CD14-positive monocyte (primary cell): ENCODE measurements at regions of chr17 and their contacts with region 1.

Region 1: DNA sequence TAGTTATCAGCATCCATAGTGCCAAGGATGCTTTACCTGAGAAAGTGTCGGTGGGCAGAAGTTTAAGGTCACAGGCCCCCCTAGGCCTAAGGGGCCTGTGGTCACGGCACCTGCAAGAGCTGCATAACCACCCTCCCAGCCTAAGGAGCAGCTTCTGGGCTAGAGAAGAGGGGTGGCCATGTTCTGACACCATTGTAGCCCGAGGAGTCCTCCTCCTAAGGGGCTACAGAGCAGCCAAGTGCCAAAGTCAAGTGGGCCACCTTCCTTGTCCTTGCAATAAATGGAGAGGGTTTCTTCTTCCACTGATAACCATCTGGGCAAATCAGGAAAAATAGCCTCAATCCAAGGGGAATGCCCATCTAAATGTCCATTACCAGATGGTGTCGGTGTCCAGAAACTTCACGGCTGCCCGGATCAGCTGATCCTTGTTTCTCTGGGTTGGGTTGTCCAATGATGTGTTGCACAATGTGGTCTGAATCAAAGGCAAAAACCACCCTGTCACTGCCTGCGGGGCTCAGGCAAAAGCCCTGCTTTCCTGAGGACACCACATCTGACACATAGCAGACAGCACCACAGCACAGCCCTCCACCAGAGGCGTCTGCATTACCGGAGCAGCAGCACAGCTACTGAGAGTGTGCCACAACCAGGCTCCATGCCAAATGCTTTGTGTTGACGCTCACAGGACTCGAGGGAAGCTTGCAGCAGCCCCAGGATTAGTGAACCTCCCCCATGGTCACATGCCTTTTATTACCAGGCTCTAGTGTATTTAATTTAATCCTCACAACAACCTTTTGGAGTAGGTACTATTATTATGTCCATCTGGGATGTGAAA is 12.8 kb downstream of the ATPAF2 start:
- DNase-seq: peak; percentile 90 to 97 (median 93)
- H3K4me3 ChIP-seq: peak overlapping the region in 1 of 3 experiments; percentile 21
- H3K4me3 Mint-ChIP-seq: peak overlapping the region in 1 of 2 donors; percentile 35
- H3K27ac ChIP-seq: peak overlapping the region; percentile 96 to 99
- H3K27ac Mint-ChIP-seq: peak overlapping the region; percentile 94 to 99 (median 97)
- H3K4me1 ChIP-seq: peaks cover 25 to 30% of the 10 kb centered on the region in 2 donors
- H3K4me1 Mint-ChIP-seq: peaks cover 29% of the 10 kb centered on the region
- H3K27me3 ChIP-seq: no peaks in the 10 kb centered on the region
- H3K27me3 Mint-ChIP-seq: peaks cover 0 to 1% (median 0%) of the 10 kb centered on the region in 3 donors
- CTCF ChIP-seq: no peak

Region 2: DNA sequence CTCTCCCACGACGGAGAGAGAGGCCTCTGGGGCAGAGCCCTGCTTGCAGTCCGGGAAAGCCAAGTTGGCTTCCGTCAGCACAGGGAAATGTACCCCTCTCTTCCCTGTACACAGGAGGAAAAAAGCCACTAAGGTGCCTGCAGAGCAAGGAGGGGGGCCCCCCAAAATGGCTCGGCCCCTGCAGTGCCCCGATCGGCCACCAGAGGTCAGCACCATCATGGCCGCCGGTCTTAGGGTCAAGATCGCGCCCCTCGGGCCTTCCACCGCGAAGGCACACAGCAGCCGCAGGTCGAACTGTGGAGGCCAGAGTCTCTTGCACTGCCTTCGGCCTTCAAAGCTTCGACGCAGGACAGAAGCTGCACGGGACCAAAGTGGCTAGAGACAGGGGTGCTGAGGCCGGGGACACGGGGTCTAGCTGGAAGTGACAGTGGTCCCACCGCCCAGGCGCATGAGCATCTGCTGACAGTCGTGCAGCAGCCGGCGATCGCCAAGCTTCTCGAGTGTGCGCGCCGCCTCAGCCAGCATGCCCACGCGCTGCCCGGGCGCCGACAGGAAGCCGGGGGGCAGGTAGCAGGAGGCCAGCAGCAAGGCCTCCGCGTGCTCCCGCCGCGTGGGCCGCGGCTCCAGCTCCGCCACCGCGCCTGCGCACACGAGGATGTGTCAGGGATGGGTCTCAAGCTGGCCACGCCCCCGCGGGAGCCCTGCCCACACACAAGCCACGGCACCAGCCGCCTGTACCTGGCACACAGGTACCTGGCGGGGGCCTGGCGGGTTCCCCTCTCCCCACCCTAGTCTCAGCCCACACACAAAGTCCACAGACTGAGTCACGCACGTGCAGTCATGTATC is 213.7 kb before region 1 on chr17:
- intact Hi-C with region 1: loop called in 1 of 2 experiments (anchors 10 kb)
- DNase-seq: peak; percentile 54 to 64 (median 56)
- H3K4me3 ChIP-seq: no peak overlapping the region
- H3K4me3 Mint-ChIP-seq: no peak overlapping the region
- H3K27ac ChIP-seq: no peak overlapping the region
- H3K27ac Mint-ChIP-seq: peak overlapping the region in 2 of 7 donors; percentile 15 to 50
- H3K4me1 ChIP-seq: no peaks in the 10 kb centered on the region
- H3K4me1 Mint-ChIP-seq: no peaks in the 10 kb centered on the region
- H3K27me3 ChIP-seq: no peaks in the 10 kb centered on the region
- H3K27me3 Mint-ChIP-seq: peaks cover 0 to 3% (median 3%) of the 10 kb centered on the region in 3 donors
- CTCF ChIP-seq: peak; percentile 100

Region 3: DNA sequence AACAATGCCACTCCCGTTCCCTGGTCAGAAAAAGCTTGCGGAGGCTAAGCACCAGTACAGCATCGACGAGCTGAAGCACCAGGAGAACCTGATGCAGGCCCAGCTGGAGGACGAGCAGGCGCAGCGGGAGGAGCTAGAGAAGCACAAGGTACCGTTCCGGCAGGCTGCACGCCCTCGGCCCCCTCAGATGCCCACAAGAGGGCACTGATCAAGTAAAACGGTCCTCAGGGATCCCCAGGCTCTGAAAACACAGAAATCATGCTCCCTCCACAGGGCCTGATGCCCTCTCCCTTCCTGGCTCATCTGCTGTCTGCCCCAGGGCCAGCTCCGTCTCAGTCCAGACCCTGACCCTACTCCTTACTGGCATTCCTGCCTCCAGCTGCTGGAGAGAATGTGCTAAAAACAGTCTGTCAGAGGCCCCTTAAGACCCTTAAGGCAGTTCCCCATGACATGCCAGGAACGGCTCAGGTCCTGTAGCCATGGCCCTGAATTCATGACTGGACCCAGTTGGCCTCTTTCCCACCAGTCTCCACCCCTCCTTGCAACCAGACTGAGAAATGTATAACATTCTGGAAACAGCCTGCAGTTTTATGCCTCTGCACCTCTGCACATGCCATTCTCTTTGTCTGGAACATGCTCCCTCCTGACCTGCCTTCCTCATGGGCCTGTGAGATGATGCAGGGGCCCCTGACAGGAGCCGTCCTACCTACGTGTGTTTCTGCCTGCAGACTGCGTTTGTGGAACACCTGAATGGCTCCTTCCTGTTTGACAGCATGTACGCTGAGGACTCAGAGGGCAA is 31.7 kb before region 1 on chr17:
- intact Hi-C with region 1: loop called in 1 of 2 experiments (anchors 5 kb)
- DNase-seq: peak in 2 of 3 donors; percentile 12 to 30
- H3K4me3 ChIP-seq: no peak overlapping the region
- H3K4me3 Mint-ChIP-seq: no peak overlapping the region
- H3K27ac ChIP-seq: no peak overlapping the region
- H3K27ac Mint-ChIP-seq: peak overlapping the region in 4 of 7 donors; percentile 13 to 61 (median 23)
- H3K4me1 ChIP-seq: no peaks in the 10 kb centered on the region
- H3K4me1 Mint-ChIP-seq: peaks cover 3% of the 10 kb centered on the region
- H3K27me3 ChIP-seq: no peaks in the 10 kb centered on the region
- H3K27me3 Mint-ChIP-seq: peaks cover 2 to 8% (median 4%) of the 10 kb centered on the region in 3 donors
- CTCF ChIP-seq: peak; percentile 38

Region 4: GRCh38 chr17:18166894-18167293 is 140.7 kb after region 1 on chr17:
- intact Hi-C with region 1: no loop called
- DNase-seq: no peak
- H3K4me3 ChIP-seq: no peak overlapping the region
- H3K4me3 Mint-ChIP-seq: no peak overlapping the region
- H3K27ac ChIP-seq: no peak overlapping the region
- H3K27ac Mint-ChIP-seq: peak overlapping the region in 1 of 7 donors; percentile 0
- H3K4me1 ChIP-seq: no peaks in the 10 kb centered on the region
- H3K4me1 Mint-ChIP-seq: no peaks in the 10 kb centered on the region
- H3K27me3 ChIP-seq: no peaks in the 10 kb centered on the region
- H3K27me3 Mint-ChIP-seq: peaks cover 0 to 2% (median 2%) of the 10 kb centered on the region in 3 donors
- CTCF ChIP-seq: no peak